ENCODE measurements at regions of chr15 and their contacts with region 1.

Region 1: DNA sequence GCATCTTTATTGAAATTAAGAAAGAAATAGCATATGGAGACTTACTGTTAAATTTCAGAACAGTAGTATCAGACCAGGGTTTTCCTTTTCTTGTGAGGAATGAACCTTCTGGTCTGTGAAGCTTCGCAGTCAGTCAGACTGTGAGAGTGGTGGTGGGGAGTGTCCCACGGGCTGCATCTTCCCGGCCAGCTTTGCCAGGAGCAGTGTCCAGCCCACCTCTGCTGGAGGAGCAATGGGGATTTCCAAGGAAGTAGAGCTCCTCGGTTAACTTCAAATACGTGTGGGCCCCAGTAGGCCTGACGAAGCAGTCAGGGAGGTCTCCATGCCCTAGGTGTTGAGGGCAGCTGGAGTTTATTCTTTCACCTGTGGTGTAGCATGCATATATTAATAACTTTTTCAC is 40.9 kb upstream of the FBXL22 start:
- DNase-seq: no peak
- H3K4me3 ChIP-seq: no peak overlapping the region
- H3K27ac ChIP-seq: no peak overlapping the region
- H3K4me1 ChIP-seq: no peaks in the 10 kb centered on the region
- H3K27me3 ChIP-seq: no peaks in the 10 kb centered on the region
- CTCF ChIP-seq: no peak

Region 2: DNA sequence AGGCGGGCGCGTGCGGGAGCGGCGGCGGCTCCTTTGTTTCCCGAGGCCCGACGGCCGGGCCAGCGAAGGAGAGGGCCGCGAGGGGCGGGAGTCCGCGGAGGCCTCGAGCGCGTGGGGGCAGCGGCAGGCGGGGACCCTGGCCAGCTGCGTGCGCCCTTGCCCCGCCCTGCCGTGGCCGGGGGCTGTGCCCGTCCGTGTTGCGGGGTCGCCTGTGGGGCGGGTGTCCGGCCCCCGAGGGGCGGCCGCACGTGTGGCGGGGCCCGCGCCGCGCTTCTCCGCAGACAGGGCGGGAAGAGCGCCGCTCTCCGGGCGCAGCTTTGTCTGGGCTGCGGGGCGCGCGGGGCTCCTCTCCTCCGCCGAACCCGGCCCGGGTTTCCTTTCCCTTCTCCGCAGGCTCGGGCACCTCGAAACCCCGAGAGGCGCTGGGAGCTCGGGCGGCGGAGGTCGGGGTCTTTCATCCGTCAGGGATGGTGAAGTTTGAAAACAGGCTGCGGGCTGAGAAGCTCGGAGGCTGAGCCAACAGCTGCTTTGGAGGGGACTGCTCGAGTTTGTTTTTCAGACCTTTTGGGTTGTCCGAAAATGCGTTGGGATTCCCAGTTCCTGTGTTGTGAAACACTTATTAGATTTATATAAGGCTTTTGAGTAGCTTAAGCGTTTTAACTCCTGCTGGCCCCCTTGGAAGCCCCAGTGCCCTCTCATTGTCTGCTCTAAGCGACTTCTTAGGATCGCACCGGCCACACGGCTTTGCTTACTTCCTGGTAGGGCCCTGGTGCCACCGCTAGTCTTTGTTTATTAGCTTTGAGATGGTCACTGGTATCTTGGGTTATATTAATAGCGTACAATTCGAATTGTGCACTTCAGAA is 51.0 kb before region 1 on chr15:
- intact Hi-C with region 1: loop called (anchors 5 kb)
- DNase-seq: peak; percentile 76
- H3K4me3 ChIP-seq: peak overlapping the region; percentile 73
- H3K27ac ChIP-seq: peak overlapping the region; percentile 95
- H3K4me1 ChIP-seq: peaks cover 28% of the 10 kb centered on the region
- H3K27me3 ChIP-seq: no peaks in the 10 kb centered on the region
- CTCF ChIP-seq: no peak